Sigmoid colon (tissue), 7 donors: ENCODE measurements at regions of chr18 and their contacts with region 1.

Region 1: DNA sequence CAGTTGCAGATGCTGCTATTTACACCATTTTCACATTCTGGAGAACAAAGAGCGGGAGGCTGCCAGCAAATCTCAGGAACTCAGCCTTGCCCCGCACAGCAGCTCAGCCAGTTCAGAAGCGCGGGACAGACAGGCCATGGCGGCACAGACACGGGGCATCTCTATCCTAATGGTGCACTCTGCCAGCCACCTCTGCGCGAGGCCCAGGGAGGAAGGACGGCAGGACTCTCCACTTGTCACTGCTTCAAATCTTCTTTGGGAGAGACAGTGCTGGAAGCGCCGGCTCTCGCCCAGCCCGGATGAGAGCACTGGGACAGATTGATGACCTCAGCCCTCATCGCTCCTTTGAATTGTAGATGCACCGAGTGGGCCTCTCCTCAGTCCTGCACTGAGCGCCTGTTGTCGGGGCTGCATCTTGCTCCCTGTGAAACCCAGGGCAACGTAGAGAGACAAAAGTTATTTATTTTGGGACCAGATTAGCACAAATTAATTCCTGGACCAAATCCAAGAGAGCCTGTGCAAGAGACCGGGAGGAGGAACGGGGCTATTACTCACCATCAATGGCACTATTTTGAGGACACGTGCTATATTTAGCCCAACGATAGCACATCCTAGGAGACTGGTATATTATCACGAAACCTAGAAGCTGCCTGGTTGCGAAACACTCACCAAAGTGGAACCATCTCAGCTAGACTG is 211.4 kb upstream of the SMIM21 start:
- DNase-seq: peak; percentile 76
- H3K4me3 ChIP-seq: peak overlapping the region; percentile 0 to 48 (median 42)
- H3K27ac ChIP-seq: peak overlapping the region; percentile 57 to 88 (median 83)
- H3K4me1 ChIP-seq: peaks cover 0 to 51% (median 26%) of the 10 kb centered on the region in 4 donors
- H3K27me3 ChIP-seq: no peaks in the 10 kb centered on the region
- CTCF ChIP-seq: no peak
- EP300 ChIP-seq: no peak
- POLR2A ChIP-seq: no peak

Region 2: GRCh38 chr18:75687626-75688025 is 48.7 kb after region 1 on chr18:
- intact Hi-C with region 1: loop called (anchors 5 kb)
- DNase-seq: no peak
- H3K4me3 ChIP-seq: no peak overlapping the region
- H3K27ac ChIP-seq: peak overlapping the region in 3 of 4 donors; percentile 27 to 62 (median 46)
- H3K4me1 ChIP-seq: peaks cover 0 to 24% (median 20%) of the 10 kb centered on the region in 4 donors
- H3K27me3 ChIP-seq: no peaks in the 10 kb centered on the region
- CTCF ChIP-seq: no peak
- EP300 ChIP-seq: no peak
- POLR2A ChIP-seq: no peak